PC-9 (cell line): ENCODE measurements at regions of chr22 and their contacts with region 1.

Region 1: DNA sequence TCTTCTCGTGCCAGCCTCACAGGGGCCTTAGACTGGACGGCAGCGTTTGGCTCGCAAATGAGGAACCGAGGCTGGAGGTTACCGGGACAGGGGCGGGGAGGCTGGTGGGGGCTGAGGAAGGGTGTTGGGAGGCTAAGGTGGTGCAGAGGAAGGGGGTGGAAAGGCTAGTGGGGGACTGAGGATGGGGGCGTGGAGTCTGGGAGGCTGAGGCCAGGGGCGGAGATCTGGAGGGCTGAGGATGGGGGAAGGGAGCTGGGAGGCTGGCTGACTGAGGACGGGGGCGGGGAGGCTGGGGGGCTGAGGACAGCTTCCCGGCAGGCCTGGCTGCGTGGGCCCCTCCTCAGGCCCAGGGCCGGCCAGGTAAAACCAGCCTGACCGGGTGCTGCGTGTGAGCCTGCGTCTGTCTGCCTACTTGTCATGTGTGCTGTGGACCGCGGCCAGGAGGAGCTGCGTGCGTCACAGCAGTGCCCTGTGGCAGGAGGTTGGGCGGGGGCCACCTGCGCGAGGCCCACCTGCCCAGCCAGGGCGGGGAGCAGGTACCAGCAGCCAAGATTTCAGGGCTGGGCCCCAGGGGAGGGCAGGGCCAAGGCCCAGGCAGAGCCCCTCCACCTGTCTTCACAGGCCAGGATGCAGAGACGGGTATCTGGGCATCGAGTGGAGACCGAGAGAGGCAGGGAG is 9.4 kb upstream of the PIM3 start:
- DNase-seq: peak; percentile 88 to 98
- H3K4me3 ChIP-seq: no peak overlapping the region
- H3K27ac ChIP-seq: peak overlapping the region; percentile 57
- H3K4me1 ChIP-seq: peaks cover 43% of the 10 kb centered on the region
- H3K27me3 ChIP-seq: no peaks in the 10 kb centered on the region
- CTCF ChIP-seq: no peak

Region 2: GRCh38 chr22:48282804-48283203 is 1668.3 kb before region 1 on chr22:
- CTCF ChIA-PET with region 1: no interaction called
- POLR2A ChIA-PET with region 1: interaction called, 20 read pairs
- intact Hi-C with region 1: no loop called
- DNase-seq: no peak
- H3K4me3 ChIP-seq: no peak overlapping the region
- H3K27ac ChIP-seq: no peak overlapping the region
- H3K4me1 ChIP-seq: no peaks in the 10 kb centered on the region
- H3K27me3 ChIP-seq: peaks cover 66% of the 10 kb centered on the region
- CTCF ChIP-seq: no peak